Endothelial cell of umbilical vein (primary cell): ENCODE measurements at regions of chr10 and their contacts with region 1.

Region 1: DNA sequence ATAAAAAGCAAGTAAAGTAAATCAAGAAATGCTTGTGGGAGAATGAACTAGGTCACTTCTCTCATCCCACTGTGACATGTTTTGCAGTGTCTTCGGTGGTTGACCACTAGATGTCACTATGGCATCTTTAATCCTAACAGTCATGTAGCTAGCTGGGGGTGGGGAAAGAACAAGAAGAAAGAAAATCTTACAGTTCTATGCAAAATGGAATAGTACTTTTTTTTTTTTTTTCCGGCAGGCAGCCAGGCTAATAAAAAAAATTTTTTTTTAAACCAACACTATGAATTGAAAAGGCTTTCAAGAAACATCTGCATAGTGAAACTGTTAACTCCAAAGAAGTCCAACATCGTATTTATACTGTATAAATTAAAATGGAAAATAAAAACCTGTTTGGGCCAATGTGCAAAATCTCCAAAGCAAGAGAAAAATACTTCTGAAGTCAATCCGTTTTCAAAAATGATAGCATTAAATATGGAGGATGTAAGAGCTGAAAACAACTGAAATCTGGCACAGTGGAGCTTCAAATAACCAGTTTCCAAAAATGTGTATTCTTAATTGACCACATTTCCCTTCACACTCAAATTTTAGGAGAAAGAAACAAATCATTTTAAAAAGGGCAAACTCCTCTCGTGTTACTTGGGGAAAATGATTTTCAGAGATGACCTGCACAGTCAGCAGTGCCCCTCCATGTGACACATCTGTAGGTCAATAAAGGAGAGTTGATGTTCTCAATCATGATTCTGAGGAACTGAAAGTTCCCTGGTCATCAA is 38.5 kb downstream of the CDK1 start:
- DNase-seq: peak; percentile 88
- H3K4me3 ChIP-seq: no peak overlapping the region
- H3K27ac ChIP-seq: peak overlapping the region; percentile 36
- H3K4me1 ChIP-seq: peaks cover 26% of the 10 kb centered on the region
- H3K27me3 ChIP-seq: no peaks in the 10 kb centered on the region
- CTCF ChIP-seq: peak; percentile 64 to 71
- POLR2A ChIP-seq: no peak

Region 2: GRCh38 chr10:60883187-60883586 is 66.4 kb after region 1 on chr10:
- CTCF ChIA-PET with region 1: interaction called, 6 read pairs
- POLR2A ChIA-PET with region 1: no interaction called
- dilution Hi-C with region 1: no loop called
- intact Hi-C with region 1: loop called (anchors 1 kb)
- DNase-seq: peak; percentile 61
- H3K4me3 ChIP-seq: no peak overlapping the region
- H3K27ac ChIP-seq: no peak overlapping the region
- H3K4me1 ChIP-seq: no peaks in the 10 kb centered on the region
- H3K27me3 ChIP-seq: no peaks in the 10 kb centered on the region
- CTCF ChIP-seq: peak; percentile 41 to 64
- POLR2A ChIP-seq: no peak

Region 3: GRCh38 chr10:61140765-61141392 is 324.1 kb after region 1 on chr10:
- CTCF ChIA-PET with region 1: interaction called, 10 read pairs
- POLR2A ChIA-PET with region 1: no interaction called
- dilution Hi-C with region 1: no loop called
- intact Hi-C with region 1: loop called (anchors 1 kb)
- DNase-seq: peak; percentile 88
- H3K4me3 ChIP-seq: no peak overlapping the region
- H3K27ac ChIP-seq: peak overlapping the region; percentile 12
- H3K4me1 ChIP-seq: peaks cover 21% of the 10 kb centered on the region
- H3K27me3 ChIP-seq: no peaks in the 10 kb centered on the region
- CTCF ChIP-seq: peak; percentile 51 to 55
- POLR2A ChIP-seq: no peak

Region 4: GRCh38 chr10:61475449-61475873 is 658.6 kb after region 1 on chr10:
- CTCF ChIA-PET with region 1: interaction called, 3 read pairs
- POLR2A ChIA-PET with region 1: no interaction called
- dilution Hi-C with region 1: no loop called
- intact Hi-C with region 1: loop called (anchors 5 kb)
- DNase-seq: peak; percentile 94
- H3K4me3 ChIP-seq: no peak overlapping the region
- H3K27ac ChIP-seq: peak overlapping the region; percentile 55
- H3K4me1 ChIP-seq: peaks cover 26% of the 10 kb centered on the region
- H3K27me3 ChIP-seq: no peaks in the 10 kb centered on the region
- CTCF ChIP-seq: no peak
- POLR2A ChIP-seq: no peak

Region 5: DNA sequence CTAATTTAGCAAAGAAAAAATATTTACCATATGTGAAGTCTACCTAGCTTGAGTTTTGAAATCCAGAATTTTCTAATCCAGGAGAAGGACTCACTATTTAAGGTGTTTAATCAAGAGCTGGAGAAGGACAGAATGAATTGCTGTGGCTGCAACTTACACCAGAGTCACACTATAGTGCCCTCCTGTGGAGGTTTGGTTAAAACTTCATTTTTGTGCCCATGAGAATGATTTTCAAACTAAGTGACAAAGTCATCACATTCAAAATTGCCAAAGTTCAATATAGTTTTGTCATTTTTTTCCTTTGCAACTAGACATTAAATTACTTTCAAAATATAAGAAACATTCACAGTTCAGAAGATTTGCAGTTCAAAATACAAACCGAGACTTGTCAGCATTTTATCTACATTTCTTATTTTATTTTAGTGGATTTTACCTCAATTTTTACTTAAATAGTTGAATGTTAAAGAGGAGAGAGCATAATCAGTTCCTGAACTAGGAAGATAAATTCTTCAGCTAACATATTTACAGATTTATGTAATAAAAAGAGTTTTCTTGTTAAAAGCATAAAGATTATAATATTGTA is 916.6 kb after region 1 on chr10:
- CTCF ChIA-PET with region 1: interaction called, 17 read pairs
- POLR2A ChIA-PET with region 1: no interaction called
- dilution Hi-C with region 1: no loop called
- intact Hi-C with region 1: loop called (anchors 1 kb)
- DNase-seq: peak; percentile 68
- H3K4me3 ChIP-seq: no peak overlapping the region
- H3K27ac ChIP-seq: no peak overlapping the region
- H3K4me1 ChIP-seq: peaks cover 3% of the 10 kb centered on the region
- H3K27me3 ChIP-seq: no peaks in the 10 kb centered on the region
- CTCF ChIP-seq: peak; percentile 44 to 49
- POLR2A ChIP-seq: no peak

Region 6: GRCh38 chr10:62437696-62438095 is 1620.9 kb after region 1 on chr10:
- CTCF ChIA-PET with region 1: no interaction called
- POLR2A ChIA-PET with region 1: no interaction called
- dilution Hi-C with region 1: no loop called
- intact Hi-C with region 1: loop called (anchors 10 kb)
- DNase-seq: peak; percentile 73
- H3K4me3 ChIP-seq: no peak overlapping the region
- H3K27ac ChIP-seq: no peak overlapping the region
- H3K4me1 ChIP-seq: peaks cover 14% of the 10 kb centered on the region
- H3K27me3 ChIP-seq: no peaks in the 10 kb centered on the region
- CTCF ChIP-seq: peak; percentile 54 to 58
- POLR2A ChIP-seq: no peak